PC-3 (cell line): ENCODE measurements at regions of chr17 and their contacts with region 1.

Region 1: DNA sequence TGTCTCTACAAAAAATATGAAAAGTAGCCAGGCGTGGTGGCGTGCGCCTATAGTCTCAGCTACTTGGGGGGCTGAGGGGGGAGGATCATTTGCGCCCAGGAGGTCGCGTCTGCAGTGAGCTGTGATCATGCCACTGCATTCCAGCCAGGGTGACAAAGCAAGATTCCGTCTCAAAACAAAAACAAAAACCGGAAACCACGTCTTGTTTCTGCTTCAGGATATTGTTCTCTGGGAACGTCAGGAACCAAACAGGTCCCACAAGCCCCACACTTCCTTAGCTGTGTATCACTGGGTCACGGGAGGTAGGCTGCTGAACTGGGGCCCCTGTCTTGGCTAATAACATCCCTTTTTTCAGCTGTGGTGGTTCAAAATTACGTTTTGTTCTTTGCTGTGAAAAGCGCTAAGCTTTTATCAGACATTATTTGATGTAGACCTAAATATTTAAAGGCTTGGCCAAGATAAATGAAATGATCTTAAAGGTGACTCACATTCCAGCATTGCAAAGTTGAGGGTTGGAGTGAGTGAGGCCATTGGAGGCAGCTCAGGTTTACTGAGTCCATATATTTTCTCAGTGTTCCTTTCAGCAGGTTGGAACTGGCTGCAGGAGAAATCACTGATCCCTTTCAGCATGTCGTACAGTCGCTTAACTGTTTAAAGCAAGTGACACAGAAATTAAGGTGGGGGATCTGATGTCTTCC is 16.4 kb upstream of the SEC14L1 start:
- DNase-seq: peak; percentile 91
- ATAC-seq: peak; percentile 23
- H3K4me3 ChIP-seq: peak overlapping the region; percentile 9; the same call in 1 of the 2 replicates
- H3K27ac ChIP-seq: peak overlapping the region; percentile 95
- H3K4me1 ChIP-seq: peaks cover 64% of the 10 kb centered on the region
- H3K27me3 ChIP-seq: no peaks in the 10 kb centered on the region
- CTCF ChIP-seq: no peak

Region 2: DNA sequence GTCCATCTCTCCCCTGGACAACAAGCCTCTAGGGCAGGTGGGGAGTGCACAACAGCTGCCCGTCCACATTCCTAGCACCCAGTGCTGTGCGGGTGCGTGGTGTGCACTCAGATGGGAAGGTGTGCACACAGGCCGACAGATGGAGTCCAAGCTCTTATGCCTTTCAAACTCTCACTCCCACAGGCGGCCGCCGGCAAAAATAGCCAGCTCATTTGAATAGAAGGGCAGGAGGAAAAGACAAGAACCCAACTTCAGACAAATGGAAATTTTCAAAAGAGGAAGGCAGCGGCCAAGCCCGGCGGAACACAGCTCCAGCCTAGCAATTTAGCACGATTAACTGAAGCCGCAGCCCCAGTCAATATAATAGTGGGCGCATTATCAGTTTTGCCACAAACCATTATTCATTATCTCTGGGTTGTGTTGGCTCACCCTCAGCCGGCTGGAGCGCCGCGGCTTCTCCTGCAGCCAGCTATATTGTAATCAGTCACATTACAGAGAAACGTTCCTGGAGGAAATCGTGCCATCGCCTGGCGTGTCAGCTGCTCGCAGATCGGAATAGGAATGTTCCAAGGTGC is 87.4 kb before region 1 on chr17:
- CTCF ChIA-PET with region 1: no interaction called
- POLR2A ChIA-PET with region 1: no interaction called
- intact Hi-C with region 1: no loop called
- DNase-seq: no peak
- ATAC-seq: no peak
- H3K4me3 ChIP-seq: no peak overlapping the region
- H3K27ac ChIP-seq: no peak overlapping the region
- H3K4me1 ChIP-seq: no peaks in the 10 kb centered on the region
- H3K27me3 ChIP-seq: peaks cover 9% of the 10 kb centered on the region; the same call in 1 of the 2 replicates
- CTCF ChIP-seq: no peak

Region 3: GRCh38 chr17:77088455-77089123 is 35.8 kb before region 1 on chr17:
- CTCF ChIA-PET with region 1: interaction called, 7 read pairs
- POLR2A ChIA-PET with region 1: interaction called, 5 read pairs
- intact Hi-C with region 1: loop called (anchors 1 kb)
- DNase-seq: peak; percentile 98
- ATAC-seq: peak; percentile 87
- H3K4me3 ChIP-seq: peak overlapping the region; percentile 74
- H3K27ac ChIP-seq: peak overlapping the region; percentile 73
- H3K4me1 ChIP-seq: peaks cover 25% of the 10 kb centered on the region
- H3K27me3 ChIP-seq: no peaks in the 10 kb centered on the region
- CTCF ChIP-seq: peak; percentile 71

Region 4: GRCh38 chr17:77109764-77110359 is 14.5 kb before region 1 on chr17:
- CTCF ChIA-PET with region 1: no interaction called
- POLR2A ChIA-PET with region 1: interaction called, 12 read pairs
- intact Hi-C with region 1: no loop called
- DNase-seq: peak; percentile 59
- ATAC-seq: peak; percentile 73
- H3K4me3 ChIP-seq: no peak overlapping the region
- H3K27ac ChIP-seq: peak overlapping the region; percentile 15
- H3K4me1 ChIP-seq: peaks cover 13% of the 10 kb centered on the region
- H3K27me3 ChIP-seq: no peaks in the 10 kb centered on the region
- CTCF ChIP-seq: no peak

Region 5: DNA sequence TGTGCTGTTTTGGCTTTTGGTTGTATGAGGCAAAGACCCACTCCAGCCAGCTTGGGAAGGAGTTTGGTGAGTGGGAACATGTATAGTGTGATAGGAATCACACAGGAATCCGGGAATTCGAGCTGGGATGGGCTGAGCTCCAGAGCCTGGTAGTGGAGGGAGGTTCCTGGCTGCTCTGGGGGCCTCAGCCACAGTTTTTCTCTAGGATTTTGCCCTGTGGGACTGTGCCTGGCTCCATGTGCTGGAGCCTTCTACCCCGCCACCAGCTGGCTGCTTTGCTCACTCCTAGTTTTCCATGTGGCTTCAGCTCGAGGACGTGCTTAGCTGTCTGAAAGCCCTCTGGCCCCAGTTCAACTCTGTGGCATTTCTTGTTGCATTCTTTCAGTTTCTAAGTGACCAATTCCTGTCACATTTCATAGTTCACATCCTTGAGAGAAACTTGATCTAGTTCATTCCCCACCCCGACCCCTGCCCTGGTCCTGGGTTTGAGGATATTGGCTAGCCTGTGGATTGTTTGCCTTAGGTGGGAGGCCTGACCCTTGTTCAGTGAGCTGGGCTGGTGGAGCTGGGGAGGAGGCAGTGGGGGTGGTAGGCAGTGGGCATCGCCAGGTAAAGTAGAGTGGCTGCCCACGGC is 21.4 kb after region 1 on chr17:
- CTCF ChIA-PET with region 1: interaction called, 14 read pairs
- POLR2A ChIA-PET with region 1: interaction called, 28 read pairs
- intact Hi-C with region 1: loop called (anchors 1 kb)
- DNase-seq: peak; percentile 86
- ATAC-seq: peak; percentile 58
- H3K4me3 ChIP-seq: peak overlapping the region; percentile 27
- H3K27ac ChIP-seq: peak overlapping the region; percentile 71
- H3K4me1 ChIP-seq: peaks cover 40% of the 10 kb centered on the region
- H3K27me3 ChIP-seq: no peaks in the 10 kb centered on the region
- CTCF ChIP-seq: peak; percentile 38; the same call in 1 of the 2 replicates

Region 6: DNA sequence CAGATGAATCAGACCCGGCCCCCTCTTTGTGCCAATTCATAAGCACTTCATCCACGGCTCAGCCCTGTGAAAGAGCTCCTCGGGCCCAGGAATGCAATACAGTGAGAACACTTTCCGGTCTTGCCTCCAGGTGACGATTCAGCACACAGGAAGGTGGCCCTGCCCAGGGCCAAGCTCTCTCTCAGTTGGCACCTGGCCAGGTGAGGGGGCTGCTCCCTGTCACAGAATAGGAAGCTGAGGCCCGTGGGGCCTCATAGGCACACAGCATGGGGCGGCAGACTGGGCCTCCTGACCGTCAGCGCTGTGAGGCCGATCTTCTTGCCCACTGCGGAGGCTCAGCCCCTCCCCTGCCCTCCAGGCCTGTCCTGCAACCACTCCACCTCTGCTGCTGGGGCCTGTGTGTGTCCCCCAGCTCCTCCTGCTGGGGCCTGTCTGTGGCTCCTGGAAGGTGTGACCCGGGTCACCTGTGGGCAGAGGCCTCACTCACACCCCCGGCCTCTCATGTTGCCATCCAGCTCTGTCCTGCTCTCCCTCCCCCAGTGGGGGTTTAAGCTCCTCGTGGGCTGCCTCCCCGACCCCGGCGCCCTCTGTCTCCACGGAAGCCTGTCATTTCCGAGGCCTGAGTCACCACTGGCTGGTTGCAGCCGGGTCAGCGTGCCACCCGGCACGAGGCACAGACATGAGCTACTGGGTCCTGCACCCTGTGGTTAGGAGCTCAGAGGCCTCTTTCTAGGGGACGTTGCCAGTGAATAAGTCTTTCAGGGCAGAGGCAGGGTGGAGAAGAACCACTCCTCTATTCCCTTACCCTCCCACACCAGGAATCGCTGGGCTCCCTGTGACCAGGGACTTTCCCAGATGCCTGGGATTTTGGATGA is 130.8 kb after region 1 on chr17:
- CTCF ChIA-PET with region 1: interaction called, 3 read pairs
- POLR2A ChIA-PET with region 1: interaction called, 12 read pairs
- intact Hi-C with region 1: no loop called
- DNase-seq: peak; percentile 99
- ATAC-seq: peak; percentile 81
- H3K4me3 ChIP-seq: peak overlapping the region; percentile 0; the same call in 1 of the 2 replicates
- H3K27ac ChIP-seq: peak overlapping the region; percentile 90
- H3K4me1 ChIP-seq: peaks cover 35% of the 10 kb centered on the region
- H3K27me3 ChIP-seq: no peaks in the 10 kb centered on the region
- CTCF ChIP-seq: no peak